ENCODE measurements at regions of chr19 and their contacts with region 1.

Region 1: GRCh38 chr19:13093407-13094105 is 9.1 kb downstream of the LYL1 start:
- DNase-seq: peak; percentile 71 to 83 (median 78)
- ATAC-seq: peak; percentile 85
- H3K4me3 ChIP-seq: no peak overlapping the region
- H3K4me3 Mint-ChIP-seq: peak overlapping the region in 1 of 10 donors; percentile 25
- H3K27ac ChIP-seq: no peak overlapping the region
- H3K27ac Mint-ChIP-seq: no peak overlapping the region
- H3K4me1 ChIP-seq: peaks cover 18% of the 10 kb centered on the region in 2 donors
- H3K4me1 Mint-ChIP-seq: peaks cover 13 to 30% (median 23%) of the 10 kb centered on the region in 7 donors
- H3K27me3 ChIP-seq: peaks cover 0 to 6% of the 10 kb centered on the region in 2 donors
- H3K27me3 Mint-ChIP-seq: peaks cover 6 to 37% (median 16%) of the 10 kb centered on the region in 5 donors

Region 2: GRCh38 chr19:12965017-12965811 is 128.3 kb before region 1 on chr19:
- CTCF ChIA-PET with region 1: interaction called, 13 read pairs
- POLR2A ChIA-PET with region 1: no interaction called
- intact Hi-C with region 1: loop called in 1 of 2 experiments (anchors 1 kb)
- DNase-seq: peak; percentile 57 to 91 (median 78)
- ATAC-seq: peak; percentile 98
- H3K4me3 ChIP-seq: peak overlapping the region; percentile 87
- H3K4me3 Mint-ChIP-seq: peak overlapping the region; percentile 78 to 92 (median 88)
- H3K27ac ChIP-seq: peak overlapping the region; percentile 21
- H3K27ac Mint-ChIP-seq: peak overlapping the region in 8 of 9 donors; percentile 10 to 86 (median 54)
- H3K4me1 ChIP-seq: peaks cover 3 to 9% of the 10 kb centered on the region in 2 donors
- H3K4me1 Mint-ChIP-seq: peaks cover 5 to 11% (median 7%) of the 10 kb centered on the region in 7 donors
- H3K27me3 ChIP-seq: no peaks in the 10 kb centered on the region
- H3K27me3 Mint-ChIP-seq: no peaks in the 10 kb centered on the region

Region 3: GRCh38 chr19:12983542-12984142 is 109.9 kb before region 1 on chr19:
- CTCF ChIA-PET with region 1: interaction called, 75 read pairs
- POLR2A ChIA-PET with region 1: interaction called, 3 read pairs
- intact Hi-C with region 1: loop called (anchors 1 kb)
- DNase-seq: peak; percentile 72 to 93 (median 84)
- ATAC-seq: peak; percentile 94
- H3K4me3 ChIP-seq: no peak overlapping the region
- H3K4me3 Mint-ChIP-seq: no peak overlapping the region
- H3K27ac ChIP-seq: peak overlapping the region; percentile 32
- H3K27ac Mint-ChIP-seq: no peak overlapping the region
- H3K4me1 ChIP-seq: peaks cover 6 to 16% of the 10 kb centered on the region in 2 donors
- H3K4me1 Mint-ChIP-seq: peaks cover 0 to 9% (median 0%) of the 10 kb centered on the region in 7 donors
- H3K27me3 ChIP-seq: no peaks in the 10 kb centered on the region
- H3K27me3 Mint-ChIP-seq: peaks cover 0 to 11% (median 0%) of the 10 kb centered on the region in 5 donors

Region 4: GRCh38 chr19:13060964-13061927 is 32.3 kb before region 1 on chr19:
- CTCF ChIA-PET with region 1: interaction called, 12 read pairs
- POLR2A ChIA-PET with region 1: no interaction called
- intact Hi-C with region 1: loop called in 1 of 2 experiments (anchors 1 kb)
- DNase-seq: peak; percentile 50 to 80 (median 66)
- ATAC-seq: peak; percentile 98
- H3K4me3 ChIP-seq: peak overlapping the region; percentile 69
- H3K4me3 Mint-ChIP-seq: peak overlapping the region; percentile 71 to 87 (median 84)
- H3K27ac ChIP-seq: no peak overlapping the region
- H3K27ac Mint-ChIP-seq: peak overlapping the region in 2 of 9 donors; percentile 21 to 36
- H3K4me1 ChIP-seq: no peaks in the 10 kb centered on the region
- H3K4me1 Mint-ChIP-seq: peaks cover 4 to 11% (median 10%) of the 10 kb centered on the region in 7 donors
- H3K27me3 ChIP-seq: no peaks in the 10 kb centered on the region
- H3K27me3 Mint-ChIP-seq: peaks cover 0 to 34% (median 16%) of the 10 kb centered on the region in 5 donors

Region 5: GRCh38 chr19:13262450-13262849 is 168.9 kb after region 1 on chr19:
- CTCF ChIA-PET with region 1: no interaction called
- POLR2A ChIA-PET with region 1: no interaction called
- intact Hi-C with region 1: loop called in 1 of 2 experiments (anchors 2 kb)
- DNase-seq: peak in 6 of 9 donors; percentile 21 to 61 (median 52)
- ATAC-seq: peak; percentile 73
- H3K4me3 ChIP-seq: no peak overlapping the region
- H3K4me3 Mint-ChIP-seq: no peak overlapping the region
- H3K27ac ChIP-seq: no peak overlapping the region
- H3K27ac Mint-ChIP-seq: peak overlapping the region in 3 of 9 donors; percentile 5 to 84 (median 47)
- H3K4me1 ChIP-seq: no peaks in the 10 kb centered on the region
- H3K4me1 Mint-ChIP-seq: peaks cover 0 to 15% (median 0%) of the 10 kb centered on the region in 7 donors
- H3K27me3 ChIP-seq: no peaks in the 10 kb centered on the region
- H3K27me3 Mint-ChIP-seq: peaks cover 0 to 21% (median 10%) of the 10 kb centered on the region in 5 donors